ENCODE measurements at regions of chr19 and their contacts with region 1.

Region 1: DNA sequence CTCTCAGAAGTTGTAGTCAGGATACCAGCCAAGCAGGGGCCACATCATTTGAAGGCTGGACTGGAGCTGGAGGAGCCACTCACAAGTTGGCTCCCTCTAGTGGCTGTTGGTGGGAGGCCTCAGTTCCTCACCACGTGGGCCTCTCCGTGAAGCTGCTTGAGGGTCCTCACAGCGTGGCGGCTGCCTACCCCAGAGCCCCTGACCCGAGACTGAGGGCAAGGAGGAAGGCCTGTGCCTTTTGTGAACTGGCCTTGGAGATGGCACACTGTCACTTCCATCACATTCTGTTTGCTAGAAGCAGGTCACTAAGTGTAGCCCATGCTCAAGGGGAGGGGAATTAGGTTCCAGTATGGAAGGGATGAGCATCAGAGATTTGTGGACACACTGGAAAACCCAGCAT is 14.6 kb downstream of the GNA11 start:
- DNase-seq: peak; percentile 73
- ATAC-seq: peak; percentile 50

Region 2: DNA sequence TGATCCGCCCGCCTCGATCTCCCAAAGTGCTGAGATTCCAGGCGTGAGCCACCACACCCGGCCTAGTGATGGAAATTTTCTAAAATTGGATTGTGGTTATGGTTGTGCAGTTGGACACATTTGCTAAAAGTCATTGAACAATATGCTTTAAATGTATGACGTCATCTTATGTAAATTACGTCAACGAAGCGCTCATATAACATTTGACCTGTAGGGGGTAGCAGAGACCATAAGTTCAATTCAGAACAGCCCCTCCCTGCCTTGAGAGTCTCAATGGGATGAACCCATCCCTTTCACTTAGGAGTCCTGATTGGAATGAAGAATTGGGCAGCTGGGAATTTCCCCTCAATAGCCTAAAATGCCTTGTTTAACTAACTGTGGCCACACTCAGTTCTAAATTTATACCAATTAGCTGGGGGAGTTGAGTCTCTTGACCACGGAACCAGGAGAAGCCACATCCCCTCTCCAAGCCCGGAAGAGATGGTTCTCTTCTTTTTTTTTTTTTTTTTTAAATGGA is 146.7 kb before region 1 on chr19:
- intact Hi-C with region 1: loop called (anchors 10 kb)
- DNase-seq: no peak
- ATAC-seq: peak; percentile 93

Region 3: DNA sequence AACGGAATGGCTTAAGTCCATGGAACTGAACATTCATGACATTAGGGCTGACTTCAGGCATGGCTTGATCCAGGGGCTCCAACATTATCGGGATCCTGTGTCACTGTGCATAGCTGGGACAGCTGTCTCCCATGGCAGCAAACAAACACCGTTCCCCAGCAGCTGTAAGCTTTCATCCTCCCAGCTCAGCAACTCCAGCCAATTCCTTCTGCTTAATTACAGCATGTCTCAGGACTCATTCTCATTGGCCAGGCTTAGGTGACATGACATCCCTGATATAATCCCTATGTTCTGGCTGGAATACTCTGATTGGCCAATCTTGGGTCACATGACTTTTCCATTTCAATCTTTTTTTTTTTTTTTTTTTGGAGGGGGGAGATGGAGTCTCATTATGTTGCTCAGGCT is 35.6 kb before region 1 on chr19:
- intact Hi-C with region 1: loop called (anchors 5 kb)
- DNase-seq: no peak
- ATAC-seq: peak; percentile 82